ENCODE measurements at regions of chr17 and their contacts with region 1.

Region 1: DNA sequence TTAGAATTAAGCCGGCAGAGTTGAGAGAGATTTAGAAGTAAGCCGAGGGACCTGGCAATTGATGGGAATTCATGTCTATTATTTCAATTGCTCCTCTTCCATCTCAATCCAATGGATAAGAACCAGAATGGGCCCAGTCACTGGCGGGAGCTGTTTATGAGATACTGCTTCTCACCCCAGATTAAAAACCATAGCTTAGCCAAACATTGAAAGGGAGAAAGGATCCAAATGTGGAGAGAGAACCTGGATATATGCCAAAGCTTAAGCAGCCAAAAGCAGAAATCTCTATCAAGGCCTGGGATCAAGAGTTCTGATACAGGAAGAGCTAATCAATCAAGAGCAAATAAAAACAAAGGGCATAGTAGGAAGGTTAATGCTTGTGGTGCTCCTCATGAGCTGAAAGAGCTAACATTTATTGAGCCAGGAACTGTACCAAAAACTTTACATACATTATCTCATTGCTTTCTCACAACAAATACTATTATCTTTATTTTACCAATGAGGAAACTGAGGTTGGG is 2.8 kb downstream of the SLFN12L start:
- DNase-seq: no peak
- CTCF ChIP-seq: no peak

Region 2: DNA sequence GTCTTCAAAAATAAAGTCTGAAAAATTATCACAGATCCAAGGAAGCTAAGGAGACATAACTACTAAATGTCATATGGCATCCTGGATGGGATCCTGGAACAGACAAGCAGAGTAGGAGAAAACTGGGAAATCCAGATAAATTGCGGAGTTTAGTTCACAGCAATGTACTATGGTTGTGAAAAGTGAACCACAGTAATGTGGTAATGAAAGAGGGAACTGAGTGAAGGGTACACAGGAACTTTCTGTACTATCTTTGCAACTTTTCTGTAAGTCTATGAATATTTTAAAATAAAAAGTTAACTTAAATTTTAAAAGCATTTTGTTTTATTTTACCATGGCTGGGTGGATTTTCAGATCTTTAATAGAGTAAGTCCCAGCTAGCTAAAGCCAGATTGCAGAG is 13.5 kb before region 1 on chr17:
- CTCF ChIA-PET with region 1: interaction called, 17 read pairs
- POLR2A ChIA-PET with region 1: no interaction called
- DNase-seq: no peak
- CTCF ChIP-seq: no peak

Region 3: DNA sequence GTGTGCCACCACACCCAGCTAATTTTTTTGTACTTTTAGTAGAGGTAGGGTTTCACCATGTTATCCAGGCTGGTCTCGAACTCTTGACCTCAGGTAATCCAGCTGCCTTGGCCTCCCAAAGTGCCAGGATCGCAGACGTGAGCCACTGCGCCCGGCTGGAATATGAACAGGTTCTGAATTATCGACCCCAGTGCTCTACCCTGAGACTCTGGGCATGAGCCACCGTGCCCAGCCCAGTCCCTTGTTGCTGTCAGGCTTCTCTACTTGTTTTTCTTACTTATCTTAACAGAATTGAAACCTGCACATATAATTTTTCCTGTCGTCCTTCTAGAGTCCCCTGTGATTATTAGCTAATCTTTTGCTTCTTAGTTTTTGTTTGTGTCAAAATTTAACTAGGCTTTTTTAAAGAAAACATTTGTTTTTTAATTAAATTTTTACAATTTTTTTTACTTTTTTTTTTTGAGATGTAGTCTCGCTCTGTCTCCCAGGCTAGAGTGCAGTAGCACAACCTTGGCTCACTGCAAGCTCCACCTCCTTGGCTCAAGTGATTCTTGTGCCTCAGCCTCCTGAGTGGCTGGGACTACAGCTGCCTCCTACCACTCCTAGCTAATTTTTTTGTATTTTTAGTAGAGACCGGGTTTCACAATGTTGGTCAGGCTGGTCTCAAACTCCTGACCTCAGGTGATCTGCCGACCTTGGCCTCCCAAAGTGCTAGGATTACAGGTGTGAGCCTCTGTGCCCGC is 119.2 kb after region 1 on chr17:
- CTCF ChIA-PET with region 1: no interaction called
- POLR2A ChIA-PET with region 1: no interaction called
- DNase-seq: no peak
- CTCF ChIP-seq: no peak

Measured in GM10248 (cell line).